Activated CD4-positive, alpha-beta T cell treated with anti-CD3 and anti-CD28 coated beads, Interleukin-2, amount 10 ng/mL, durations not matched to agents 7 days and 5 days (primary cell): ENCODE measurements at regions of chr19 and their contacts with region 1.

Region 1: DNA sequence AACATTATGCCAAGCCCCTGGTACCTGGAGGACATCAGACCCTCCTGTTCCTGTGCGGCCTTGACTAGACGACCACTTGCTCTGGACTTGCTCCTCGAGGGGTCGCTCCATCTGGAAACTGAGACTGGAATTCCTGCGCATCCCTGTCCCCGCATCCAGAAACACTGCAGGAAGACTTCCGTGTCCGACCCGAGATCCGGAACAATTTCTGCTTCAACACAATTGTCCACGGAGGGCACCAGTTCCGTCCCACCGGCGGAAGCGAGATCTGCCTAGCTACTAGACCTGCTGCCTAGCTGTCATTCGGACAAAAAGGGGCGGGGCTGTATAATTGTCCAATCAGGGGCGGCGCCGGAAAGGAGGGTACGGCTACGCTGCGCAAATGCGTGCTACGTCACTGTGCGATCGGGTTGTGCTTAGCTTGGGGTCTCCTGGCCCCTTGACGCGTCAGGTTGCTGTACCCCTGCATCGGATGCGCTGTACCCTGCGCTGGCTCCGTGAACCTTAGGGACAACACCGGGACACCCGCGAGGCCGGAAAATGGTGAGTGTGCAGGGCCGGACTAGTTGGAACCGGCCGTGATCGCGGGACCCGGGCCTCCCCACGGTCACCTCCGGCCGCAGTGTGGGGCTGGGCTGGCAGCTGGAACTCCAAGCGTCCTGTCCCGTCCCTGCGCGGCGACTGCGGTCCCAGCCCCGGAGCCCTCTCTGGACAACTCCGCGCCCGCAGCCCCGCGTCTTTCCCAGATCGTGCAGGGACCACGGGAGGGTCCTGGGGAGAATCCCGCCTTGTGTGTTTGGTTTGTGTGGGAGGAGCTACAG is at the starts of genes ZNF490 and ZNF791:
- DNase-seq: peak; percentile 99
- H3K4me3 Mint-ChIP-seq: peak within 1 kb of the TSS; percentile 100
- H3K27ac Mint-ChIP-seq: peak within 1 kb of the TSS; percentile 100
- H3K4me1 Mint-ChIP-seq: peaks cover 33% of the 10 kb centered on the region
- H3K27me3 Mint-ChIP-seq: no peaks in the 10 kb centered on the region
- total RNA-seq, gene ZNF490: 15.1 to 15.8 TPM
- total RNA-seq, gene ZNF791: 31.3 to 37.3 TPM

Region 2: DNA sequence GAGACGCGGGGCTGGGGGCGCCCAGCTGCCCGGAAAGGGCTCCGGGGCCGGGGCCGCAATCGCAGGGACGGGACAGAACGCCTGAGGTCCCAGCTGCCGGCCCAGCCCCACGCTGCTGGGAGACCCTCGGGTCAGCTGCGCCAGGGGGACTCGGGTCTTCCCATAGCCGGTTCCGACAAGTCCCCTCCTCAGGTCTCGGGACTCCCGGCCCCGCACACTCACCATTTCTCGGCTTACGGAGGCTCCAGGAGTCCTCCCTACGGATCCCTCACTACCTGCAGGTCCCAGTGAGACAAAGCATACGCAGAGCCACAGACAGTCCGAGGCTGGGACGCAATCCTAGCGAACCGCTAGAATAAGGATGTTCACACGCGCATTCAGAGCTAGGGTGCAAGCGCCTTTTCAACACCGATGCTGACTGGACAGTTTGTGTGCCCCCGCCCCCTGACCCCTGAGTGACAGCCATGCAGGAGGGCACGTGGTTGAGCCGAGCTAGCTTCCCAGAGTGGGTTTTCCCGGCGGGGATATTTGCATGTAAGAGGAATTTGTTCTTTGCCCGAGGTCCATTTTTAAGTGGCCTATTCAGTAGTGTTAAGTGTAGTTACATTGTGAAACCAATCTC is 13.7 kb before region 1 on chr19:
- CTCF ChIA-PET with region 1: no interaction called
- POLR2A ChIA-PET with region 1: no interaction called
- DNase-seq: no peak
- H3K4me3 Mint-ChIP-seq: no peak overlapping the region
- H3K27ac Mint-ChIP-seq: no peak overlapping the region
- H3K4me1 Mint-ChIP-seq: no peaks in the 10 kb centered on the region
- H3K27me3 Mint-ChIP-seq: no peaks in the 10 kb centered on the region

Region 3: GRCh38 chr19:12639901-12640613 is 29.3 kb after region 1 on chr19:
- CTCF ChIA-PET with region 1: interaction called, 11 read pairs
- POLR2A ChIA-PET with region 1: interaction called, 6 read pairs
- DNase-seq: peak; percentile 84
- H3K4me3 Mint-ChIP-seq: peak overlapping the region; percentile 64
- H3K27ac Mint-ChIP-seq: peak overlapping the region; percentile 86
- H3K4me1 Mint-ChIP-seq: peaks cover 19% of the 10 kb centered on the region
- H3K27me3 Mint-ChIP-seq: no peaks in the 10 kb centered on the region